ENCODE measurements at regions of chr1 and their contacts with region 1.

Region 1: GRCh38 chr1:145918144-145918992 is at the start of gene PEX11B:
- DNase-seq: peak; percentile 92
- H3K4me3 Mint-ChIP-seq: peak within 1 kb of the TSS; percentile 94
- H3K27ac Mint-ChIP-seq: peak within 1 kb of the TSS; percentile 99
- H3K4me1 Mint-ChIP-seq: peaks cover 43% of the 10 kb centered on the region
- H3K27me3 Mint-ChIP-seq: no peaks in the 10 kb centered on the region
- CTCF ChIP-seq: no peak
- total RNA-seq, gene PEX11B: 35.5 and 36.2 TPM in 2 replicates

Region 2: GRCh38 chr1:145837656-145838055 is 80.7 kb before region 1 on chr1:
- CTCF ChIA-PET with region 1: no interaction called
- POLR2A ChIA-PET with region 1: no interaction called
- intact Hi-C with region 1: no loop called
- DNase-seq: no peak
- H3K4me3 Mint-ChIP-seq: no peak overlapping the region
- H3K27ac Mint-ChIP-seq: no peak overlapping the region
- H3K4me1 Mint-ChIP-seq: no peaks in the 10 kb centered on the region
- H3K27me3 Mint-ChIP-seq: no peaks in the 10 kb centered on the region
- CTCF ChIP-seq: no peak

Region 3: GRCh38 chr1:145906954-145907753 is 11.2 kb before region 1 on chr1:
- CTCF ChIA-PET with region 1: interaction called, 617 read pairs
- POLR2A ChIA-PET with region 1: interaction called, 25 read pairs
- intact Hi-C with region 1: loop called (anchors 1 kb)
- DNase-seq: no peak
- H3K4me3 Mint-ChIP-seq: no peak overlapping the region
- H3K27ac Mint-ChIP-seq: peak overlapping the region; percentile 57
- H3K4me1 Mint-ChIP-seq: peaks cover 24% of the 10 kb centered on the region
- H3K27me3 Mint-ChIP-seq: no peaks in the 10 kb centered on the region
- CTCF ChIP-seq: no peak

Region 4: DNA sequence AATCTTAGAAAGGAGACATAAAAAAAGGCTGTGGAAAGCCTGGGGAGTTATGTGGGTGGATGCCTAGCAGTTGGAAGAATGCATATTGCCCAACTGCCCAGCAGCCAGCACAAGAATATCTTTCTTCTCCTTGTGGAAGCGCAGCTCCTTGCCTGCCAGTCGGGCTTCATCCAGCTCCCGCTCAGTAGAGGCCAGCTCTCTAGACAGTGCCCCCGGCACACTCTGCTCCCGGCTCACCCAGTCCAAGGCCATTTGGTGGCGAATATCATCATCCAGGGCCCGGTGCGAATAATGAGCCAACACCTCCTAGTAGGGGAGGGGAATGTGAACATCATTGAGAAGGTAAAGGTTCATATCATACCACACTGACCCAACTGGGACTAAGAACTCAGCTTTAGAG is 17.9 kb after region 1 on chr1:
- CTCF ChIA-PET with region 1: interaction called, 3 read pairs
- POLR2A ChIA-PET with region 1: interaction called, 17 read pairs
- intact Hi-C with region 1: no loop called
- DNase-seq: no peak
- H3K4me3 Mint-ChIP-seq: no peak overlapping the region
- H3K27ac Mint-ChIP-seq: no peak overlapping the region
- H3K4me1 Mint-ChIP-seq: no peaks in the 10 kb centered on the region
- H3K27me3 Mint-ChIP-seq: no peaks in the 10 kb centered on the region
- CTCF ChIP-seq: no peak